Posterior vena cava (tissue), 2 donors: ENCODE measurements at regions of chr7 and their contacts with region 1.

Region 1: GRCh38 chr7:122423591-122423990 is 119.0 kb upstream of the FEZF1 start:
- DNase-seq: no peak

Region 2: DNA sequence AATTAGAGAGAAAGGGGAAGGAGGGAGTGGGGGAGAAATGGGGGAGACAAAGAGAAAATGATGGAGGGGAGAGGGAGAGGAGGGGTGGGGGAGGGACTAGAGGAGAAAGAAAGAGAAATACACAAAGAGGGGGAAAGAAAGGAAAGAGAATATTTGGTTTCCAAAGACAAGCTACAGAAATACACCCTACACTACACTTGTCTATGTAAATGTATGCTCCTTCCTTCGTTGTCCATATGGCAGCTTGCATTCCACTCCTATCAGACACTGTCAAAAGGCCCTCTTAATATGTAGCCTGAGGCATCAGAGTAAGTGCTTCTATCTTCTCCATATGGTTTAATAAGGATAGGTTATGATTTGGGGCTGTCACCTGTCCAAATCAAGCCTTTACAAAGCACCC is 26.2 kb before region 1 on chr7:
- intact Hi-C with region 1: loop called in 1 of 2 experiments (anchors 1 kb)
- DNase-seq: no peak